ENCODE measurements at regions of chrX and their contacts with region 1.

Region 1: DNA sequence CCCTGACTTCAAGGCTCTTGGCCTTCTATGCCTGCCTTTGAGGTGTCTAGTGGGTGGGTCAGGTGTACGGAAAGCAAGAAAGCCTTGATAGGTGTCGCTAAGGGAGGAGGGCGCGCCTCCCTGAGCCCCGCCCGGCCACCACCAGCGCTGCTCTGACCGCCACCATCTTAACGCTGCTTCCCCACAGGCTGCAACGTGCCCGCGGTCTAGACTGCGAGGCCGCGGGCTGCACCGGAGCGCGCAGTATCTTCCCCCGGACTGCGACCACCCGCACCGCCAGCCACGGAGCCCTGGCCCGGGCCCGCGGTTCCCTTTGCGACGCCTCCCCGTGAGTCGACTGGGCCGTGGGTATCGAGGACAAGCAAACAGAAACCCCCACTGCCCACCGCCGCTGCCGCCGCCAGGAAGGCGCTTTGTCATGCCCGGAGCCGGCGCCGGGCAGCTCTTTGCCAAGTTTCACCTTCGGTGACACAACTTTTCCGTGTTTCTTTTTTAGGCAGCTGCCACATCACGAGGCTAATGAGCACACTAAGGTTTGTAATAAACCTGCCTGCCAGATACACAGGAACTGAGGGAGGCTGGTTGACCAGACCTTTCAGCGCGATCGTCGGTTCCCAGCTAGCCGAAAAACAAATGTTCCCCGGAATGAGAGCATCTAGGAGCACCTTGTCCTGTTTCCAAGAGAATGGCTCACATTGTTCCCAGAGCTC is 335.8 kb upstream of the F9 start:
- DNase-seq: peak; percentile 54 to 79
- ATAC-seq: peak; percentile 81 to 90
- H3K4me3 ChIP-seq: peak overlapping the region; percentile 53 to 61 (median 58)
- H3K27ac ChIP-seq: peak overlapping the region; percentile 75 to 89 (median 84)
- H3K4me1 ChIP-seq: peaks cover 6 to 12% of the 10 kb centered on the region in 2 donors
- H3K27me3 ChIP-seq: no peaks in the 10 kb centered on the region
- CTCF ChIP-seq: no peak
- POLR2A ChIP-seq: peak; percentile 68 to 76

Region 2: DNA sequence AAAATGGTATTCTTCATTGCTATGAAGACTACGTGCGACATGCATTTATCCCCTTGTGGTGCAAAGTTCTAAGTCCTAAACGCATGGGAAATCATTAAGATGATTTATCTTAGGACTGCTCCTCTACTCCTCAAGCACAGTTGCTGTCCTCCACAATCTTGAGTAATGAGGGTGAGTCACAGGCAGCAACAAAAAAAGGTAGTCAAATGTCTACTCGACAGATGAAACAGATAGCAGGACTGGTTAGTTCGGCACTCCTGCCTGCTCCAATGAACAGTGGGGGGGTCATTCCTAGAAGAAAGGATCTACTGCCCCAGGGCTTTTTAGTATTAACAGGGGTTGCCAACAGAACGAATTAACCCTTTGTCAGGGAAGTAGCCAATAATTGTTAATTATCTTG is 249.5 kb before region 1 on chrX:
- in situ Hi-C with region 1: no loop called
- intact Hi-C with region 1: loop called (anchors 5 kb)
- DNase-seq: peak; percentile 13 to 28
- ATAC-seq: peak; percentile 96 to 98
- H3K4me3 ChIP-seq: no peak overlapping the region
- H3K27ac ChIP-seq: no peak overlapping the region
- H3K4me1 ChIP-seq: peaks cover 0 to 3% of the 10 kb centered on the region in 2 donors
- H3K27me3 ChIP-seq: no peaks in the 10 kb centered on the region
- CTCF ChIP-seq: no peak
- POLR2A ChIP-seq: no peak

Region 3: GRCh38 chrX:139126493-139126892 is 68.2 kb before region 1 on chrX:
- in situ Hi-C with region 1: no loop called
- intact Hi-C with region 1: loop called (anchors 5 kb)
- DNase-seq: peak; percentile 11 to 62
- ATAC-seq: peak; percentile 94 to 98
- H3K4me3 ChIP-seq: no peak overlapping the region
- H3K27ac ChIP-seq: peak overlapping the region in 2 of 4 donors; percentile 42 to 43
- H3K4me1 ChIP-seq: no peaks in the 10 kb centered on the region
- H3K27me3 ChIP-seq: no peaks in the 10 kb centered on the region
- CTCF ChIP-seq: peak; percentile 53 to 79 (median 60)
- POLR2A ChIP-seq: no peak

Region 4: GRCh38 chrX:139290310-139290709 is 95.6 kb after region 1 on chrX:
- in situ Hi-C with region 1: no loop called
- intact Hi-C with region 1: loop called (anchors 10 kb)
- DNase-seq: no peak
- ATAC-seq: no peak
- H3K4me3 ChIP-seq: no peak overlapping the region
- H3K27ac ChIP-seq: no peak overlapping the region
- H3K4me1 ChIP-seq: peaks cover 5 to 6% of the 10 kb centered on the region in 2 donors
- H3K27me3 ChIP-seq: no peaks in the 10 kb centered on the region
- CTCF ChIP-seq: no peak
- POLR2A ChIP-seq: no peak